Activated CD8-positive, alpha-beta T cell treated with anti-CD3 and anti-CD28 coated beads for 36 hours (primary cell): ENCODE measurements at regions of chr18 and their contacts with region 1.

Region 1: GRCh38 chr18:79944126-79944741 is 7.2 kb downstream of the SLC66A2 start:
- DNase-seq: peak; percentile 71
- ATAC-seq: peak; percentile 87
- H3K4me3 Mint-ChIP-seq: peak overlapping the region; percentile 13
- H3K27ac Mint-ChIP-seq: peak overlapping the region; percentile 7
- H3K4me1 Mint-ChIP-seq: peaks cover 44% of the 10 kb centered on the region
- H3K27me3 Mint-ChIP-seq: no peaks in the 10 kb centered on the region
- CTCF ChIP-seq: no peak

Region 2: DNA sequence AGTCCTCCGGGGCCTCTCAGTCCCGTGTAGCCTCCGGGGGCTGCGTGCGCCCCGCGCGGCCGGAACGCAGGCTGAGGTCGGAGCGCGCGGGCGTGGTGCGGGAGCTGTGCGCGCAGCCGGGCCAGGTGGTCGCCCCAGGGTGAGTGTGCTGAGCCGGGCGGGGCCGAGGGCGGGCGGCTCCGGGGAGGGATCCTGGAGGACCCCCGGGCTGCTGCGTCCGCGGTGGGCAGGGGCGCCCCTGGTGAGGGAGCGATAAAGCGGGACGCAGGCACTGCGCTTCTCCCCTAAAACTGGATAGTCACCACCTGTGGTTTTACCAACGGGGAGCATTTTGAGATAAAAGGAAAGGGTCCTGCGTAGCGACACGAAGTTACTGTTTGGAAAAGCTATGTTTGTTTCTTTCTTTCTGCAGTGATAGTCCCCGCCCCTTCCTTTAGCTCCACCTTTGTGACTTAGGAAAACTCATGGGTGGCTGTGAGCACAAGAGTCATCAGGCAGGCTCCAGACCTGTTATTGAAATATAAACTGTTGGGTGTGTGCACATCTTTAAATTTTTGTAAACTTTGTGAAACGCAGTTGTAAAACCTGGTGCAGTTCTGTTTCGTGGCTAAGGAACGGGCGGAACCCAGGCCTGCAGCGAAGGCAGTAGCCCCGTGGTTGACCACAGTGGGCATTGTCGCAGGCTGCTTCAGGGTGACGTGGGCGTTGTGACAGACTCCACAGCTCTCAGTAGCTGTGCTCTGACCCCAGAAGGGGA is 263.9 kb before region 1 on chr18:
- CTCF ChIA-PET with region 1: no interaction called
- POLR2A ChIA-PET with region 1: no interaction called
- intact Hi-C with region 1: loop called (anchors 10 kb)
- DNase-seq: peak; percentile 72
- ATAC-seq: no peak
- H3K4me3 Mint-ChIP-seq: peak overlapping the region; percentile 97
- H3K27ac Mint-ChIP-seq: peak overlapping the region; percentile 96
- H3K4me1 Mint-ChIP-seq: peaks cover 70% of the 10 kb centered on the region
- H3K27me3 Mint-ChIP-seq: no peaks in the 10 kb centered on the region
- CTCF ChIP-seq: no peak

Region 3: DNA sequence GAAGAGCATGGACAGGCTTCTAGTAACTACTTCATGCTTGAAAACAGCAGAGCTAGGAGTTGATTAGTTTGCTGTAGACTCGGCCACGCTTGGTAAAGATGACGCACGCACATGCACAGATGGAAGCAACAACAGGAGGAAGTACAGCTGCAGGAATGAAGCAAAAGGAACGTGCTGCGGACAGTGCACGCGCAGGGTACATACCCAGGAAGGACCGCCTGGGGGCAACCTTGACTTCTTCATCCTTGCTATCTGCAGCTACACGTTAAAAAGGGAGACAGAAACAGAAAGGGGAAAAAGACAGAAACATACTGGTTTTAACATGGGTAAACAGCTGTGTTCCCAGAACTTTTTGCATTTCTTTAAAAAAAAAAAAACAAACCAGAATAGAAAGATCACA is 10.5 kb before region 1 on chr18:
- CTCF ChIA-PET with region 1: no interaction called
- POLR2A ChIA-PET with region 1: no interaction called
- intact Hi-C with region 1: no loop called
- DNase-seq: no peak
- ATAC-seq: no peak
- H3K4me3 Mint-ChIP-seq: no peak overlapping the region
- H3K27ac Mint-ChIP-seq: no peak overlapping the region
- H3K4me1 Mint-ChIP-seq: no peaks in the 10 kb centered on the region
- H3K27me3 Mint-ChIP-seq: no peaks in the 10 kb centered on the region
- CTCF ChIP-seq: no peak